Activated CD8-positive, alpha-beta memory T cell treated with anti-CD3 and anti-CD28 coated beads, Interleukin-2, amount 10 ng/mL, durations not matched to agents 7 days and 5 days (primary cell): ENCODE measurements at regions of chr2 and their contacts with region 1.

Region 1: DNA sequence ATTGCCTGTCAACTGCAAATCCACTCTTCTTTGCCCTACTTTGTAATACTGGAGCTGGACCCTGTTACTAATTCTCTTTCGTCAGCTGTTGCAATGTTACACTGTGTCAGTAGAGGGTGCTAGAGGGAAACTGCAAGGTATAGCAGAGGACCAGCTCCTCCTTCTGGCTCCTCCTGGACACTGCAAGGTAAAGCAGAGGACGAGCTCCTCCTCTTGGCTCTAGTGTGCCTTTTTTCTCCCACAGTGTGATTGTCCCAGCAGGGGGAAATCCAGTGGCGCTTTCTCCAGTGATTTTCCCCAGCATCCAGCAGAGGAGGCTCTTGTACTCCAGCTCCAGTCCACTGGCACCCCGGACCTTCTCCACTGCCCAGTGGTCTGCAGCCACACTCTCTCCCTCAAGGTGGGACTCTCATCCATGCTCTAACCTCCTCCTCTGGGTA is 95.6 kb downstream of the CAPN13 start:
- DNase-seq: peak; percentile 94
- ATAC-seq: peak; percentile 79
- H3K4me3 Mint-ChIP-seq: no peak overlapping the region
- H3K27ac Mint-ChIP-seq: no peak overlapping the region
- H3K4me1 Mint-ChIP-seq: peaks cover 14% of the 10 kb centered on the region
- H3K27me3 Mint-ChIP-seq: peaks cover 7% of the 10 kb centered on the region

Region 2: GRCh38 chr2:30089171-30089570 is 622.5 kb before region 1 on chr2:
- CTCF ChIA-PET with region 1: interaction called, 12 read pairs
- DNase-seq: no peak
- ATAC-seq: no peak
- H3K4me3 Mint-ChIP-seq: no peak overlapping the region
- H3K27ac Mint-ChIP-seq: no peak overlapping the region
- H3K4me1 Mint-ChIP-seq: no peaks in the 10 kb centered on the region
- H3K27me3 Mint-ChIP-seq: peaks cover 55% of the 10 kb centered on the region

Region 3: DNA sequence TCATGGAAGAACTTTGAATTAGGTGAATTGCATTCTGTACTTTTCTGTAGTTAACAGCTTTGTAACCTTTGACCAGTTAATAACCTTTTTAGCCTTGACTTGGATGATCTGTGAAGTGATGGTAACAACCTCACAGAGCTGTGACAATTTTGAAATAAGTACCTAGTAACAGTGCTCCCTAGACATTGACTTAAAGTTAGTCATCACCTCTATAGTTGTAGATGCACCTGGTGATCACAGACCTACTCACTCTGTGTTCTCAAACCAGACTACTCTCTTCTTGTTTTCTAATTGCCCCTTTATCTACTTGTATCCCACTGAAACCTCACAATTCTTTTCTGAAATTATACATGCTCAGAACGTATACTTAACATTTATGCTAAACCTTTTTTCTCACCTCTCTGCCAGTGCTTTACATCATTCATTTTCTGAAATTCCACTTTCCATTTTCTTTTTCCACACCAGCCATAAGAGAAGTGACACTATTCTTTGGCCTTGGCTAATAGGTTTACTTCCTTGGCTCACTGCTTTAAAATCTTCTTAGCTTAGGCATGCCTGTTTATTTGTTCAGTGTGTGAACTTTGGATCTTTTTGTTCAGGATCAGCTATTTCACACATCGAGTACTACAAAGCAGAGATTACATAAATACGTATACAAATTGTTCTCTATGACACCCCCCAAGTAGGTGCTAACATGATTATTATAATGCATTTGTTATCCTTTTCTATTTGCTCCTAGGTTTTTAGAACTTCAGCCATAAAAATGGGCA is 555.6 kb before region 1 on chr2:
- CTCF ChIA-PET with region 1: interaction called, 18 read pairs
- DNase-seq: no peak
- ATAC-seq: no peak
- H3K4me3 Mint-ChIP-seq: no peak overlapping the region
- H3K27ac Mint-ChIP-seq: no peak overlapping the region
- H3K4me1 Mint-ChIP-seq: peaks cover 8% of the 10 kb centered on the region
- H3K27me3 Mint-ChIP-seq: no peaks in the 10 kb centered on the region

Region 4: DNA sequence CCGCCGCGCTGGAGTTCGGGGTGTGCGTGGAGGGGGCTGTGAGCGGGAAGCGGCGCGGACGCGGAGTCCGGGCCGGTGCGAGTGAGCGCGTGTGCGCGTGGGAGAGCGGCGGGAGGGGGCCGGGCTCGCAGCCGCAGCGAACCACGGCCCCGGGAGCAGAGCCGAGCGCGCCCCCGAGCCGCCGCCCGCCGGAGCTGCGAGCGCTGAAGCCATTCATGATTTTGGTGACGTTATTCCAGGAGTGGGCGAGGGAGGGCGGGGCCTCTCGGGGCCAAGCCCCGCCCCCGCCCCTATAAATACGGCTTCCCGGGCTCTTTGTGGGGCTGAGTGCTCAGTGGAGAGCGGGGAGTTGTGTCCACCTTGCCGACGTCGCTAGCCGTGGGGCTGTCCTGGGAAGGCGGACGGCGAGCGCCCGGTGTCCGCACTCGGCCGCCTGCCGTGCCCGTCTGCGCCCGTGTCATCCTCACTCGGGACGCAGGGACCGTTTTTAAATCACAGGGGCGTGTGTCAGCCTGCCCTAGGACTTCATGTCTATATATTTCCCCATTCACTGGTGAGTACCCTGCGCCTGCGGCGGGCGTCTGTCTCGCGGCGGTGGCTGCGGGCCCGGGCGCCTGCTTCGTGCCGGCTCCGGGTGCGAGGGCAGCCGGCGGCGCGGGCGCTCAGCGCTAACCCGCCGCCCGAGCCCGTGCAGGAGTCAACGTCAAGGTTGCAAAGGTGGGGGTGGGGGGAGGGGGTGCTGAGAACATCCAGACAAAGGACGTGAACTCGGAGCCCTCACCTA is 480.3 kb before region 1 on chr2 and contains the start of gene LBH:
- CTCF ChIA-PET with region 1: interaction called, 15 read pairs
- DNase-seq: peak; percentile 88
- ATAC-seq: peak; percentile 48
- H3K4me3 Mint-ChIP-seq: peak within 1 kb of the TSS; percentile 73
- H3K27ac Mint-ChIP-seq: peak within 1 kb of the TSS; percentile 78
- H3K4me1 Mint-ChIP-seq: peaks cover 60% of the 10 kb centered on the region
- H3K27me3 Mint-ChIP-seq: peaks cover 12% of the 10 kb centered on the region
- total RNA-seq, gene LBH: 68.5 to 71.5 TPM

Region 5: GRCh38 chr2:30584116-30584515 is 127.5 kb before region 1 on chr2:
- CTCF ChIA-PET with region 1: no interaction called
- DNase-seq: no peak
- ATAC-seq: no peak
- H3K4me3 Mint-ChIP-seq: no peak overlapping the region
- H3K27ac Mint-ChIP-seq: no peak overlapping the region
- H3K4me1 Mint-ChIP-seq: peaks cover 2% of the 10 kb centered on the region
- H3K27me3 Mint-ChIP-seq: no peaks in the 10 kb centered on the region

Region 6: DNA sequence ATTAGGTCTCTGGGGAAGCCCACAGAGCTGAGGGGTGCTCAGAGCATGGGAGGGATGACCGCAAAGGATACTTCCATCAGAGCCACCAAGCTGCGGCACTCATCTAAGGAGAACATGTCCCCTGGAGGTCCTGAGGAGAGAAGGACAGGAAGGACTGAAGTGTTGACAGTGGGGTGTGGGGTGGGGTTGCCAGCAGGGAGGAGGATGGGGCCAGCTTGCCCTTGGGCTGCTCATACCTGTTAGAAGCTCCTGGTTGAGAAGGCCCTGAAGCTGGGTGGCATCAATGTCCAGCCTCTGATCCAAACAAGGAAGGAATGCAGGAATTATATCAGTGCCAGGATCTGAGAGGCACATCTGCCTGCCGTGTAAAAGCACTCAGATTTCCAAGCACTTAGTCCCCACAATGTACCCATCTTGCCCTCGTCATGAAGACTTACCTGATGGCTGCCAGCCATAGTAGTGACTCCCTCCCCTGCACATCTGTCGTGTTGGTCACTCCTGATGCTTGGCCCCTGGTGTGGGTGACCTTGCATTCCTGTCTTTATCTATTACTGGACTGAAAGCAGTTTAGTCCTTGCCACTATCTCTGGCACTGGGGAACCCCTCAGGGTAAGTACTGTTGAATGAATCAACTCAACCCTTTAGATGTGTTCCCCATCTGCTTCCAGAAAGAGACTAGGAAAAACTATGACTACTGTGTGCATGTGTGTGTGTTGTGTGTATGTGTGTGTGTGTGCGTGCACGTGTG is 26.7 kb after region 1 on chr2:
- CTCF ChIA-PET with region 1: no interaction called
- DNase-seq: no peak
- ATAC-seq: no peak
- H3K4me3 Mint-ChIP-seq: no peak overlapping the region
- H3K27ac Mint-ChIP-seq: no peak overlapping the region
- H3K4me1 Mint-ChIP-seq: no peaks in the 10 kb centered on the region
- H3K27me3 Mint-ChIP-seq: peaks cover 6% of the 10 kb centered on the region

Region 7: DNA sequence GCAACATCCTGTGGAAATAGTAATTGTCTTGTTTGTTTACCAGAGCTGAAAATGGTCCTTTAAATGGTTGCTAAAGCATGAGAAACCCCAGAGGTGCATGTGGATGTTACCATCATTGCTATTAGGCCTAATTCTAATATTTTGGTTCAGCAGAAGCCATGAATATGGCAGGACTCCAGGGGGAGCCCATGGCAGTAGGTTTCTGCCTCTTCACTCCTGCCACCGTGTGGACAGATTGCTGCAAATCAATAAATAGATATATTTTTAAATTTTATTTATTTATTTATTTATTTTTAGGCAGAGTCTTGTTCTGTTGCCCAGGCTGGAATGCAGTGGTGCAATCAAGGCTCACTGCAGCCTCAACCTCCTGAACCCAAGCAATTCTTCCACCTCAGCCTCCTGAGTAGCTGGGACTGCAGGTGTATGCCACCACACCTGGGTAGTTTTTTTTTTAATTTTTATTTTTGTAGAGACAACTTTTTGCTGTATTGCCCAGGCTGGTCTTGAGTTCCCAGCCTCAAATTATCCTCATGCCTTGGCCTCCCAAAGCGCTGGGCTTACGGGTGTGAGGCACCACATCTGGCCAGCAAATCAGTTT is 150.5 kb after region 1 on chr2:
- CTCF ChIA-PET with region 1: interaction called, 15 read pairs
- DNase-seq: peak; percentile 65
- ATAC-seq: no peak
- H3K4me3 Mint-ChIP-seq: no peak overlapping the region
- H3K27ac Mint-ChIP-seq: no peak overlapping the region
- H3K4me1 Mint-ChIP-seq: peaks cover 12% of the 10 kb centered on the region
- H3K27me3 Mint-ChIP-seq: peaks cover 6% of the 10 kb centered on the region

Region 8: DNA sequence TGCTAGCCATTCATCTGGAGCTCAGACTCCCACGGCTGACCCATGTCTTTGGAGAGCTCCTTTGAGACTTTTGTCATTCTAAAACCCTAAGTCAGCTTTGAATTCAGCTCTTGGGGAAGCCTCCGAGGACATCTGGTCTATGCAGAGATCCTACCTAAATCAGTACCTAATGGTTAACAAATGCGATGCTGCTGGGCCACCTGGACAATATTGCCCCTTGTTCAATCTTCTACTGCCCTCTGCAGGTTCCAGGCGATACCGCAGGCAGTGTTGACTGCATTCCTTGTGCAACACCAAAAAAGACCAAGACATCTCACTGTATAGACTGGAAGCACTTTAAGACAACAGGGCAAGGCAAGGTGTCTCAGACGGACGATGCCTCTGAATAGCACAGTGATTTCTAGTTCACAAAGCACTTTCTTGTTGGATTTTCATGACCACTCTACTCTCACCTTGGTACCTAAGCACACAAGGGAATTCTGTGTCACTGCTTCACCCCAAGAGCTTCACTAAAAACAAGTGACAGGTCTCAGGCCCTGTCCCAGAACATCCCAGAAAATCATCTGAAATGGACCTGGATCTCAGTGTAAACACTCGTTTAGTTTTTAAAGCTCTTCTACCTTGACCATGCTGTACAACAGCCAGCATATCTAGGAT is 622.0 kb after region 1 on chr2:
- CTCF ChIA-PET with region 1: interaction called, 49 read pairs
- DNase-seq: peak; percentile 87
- ATAC-seq: peak; percentile 94
- H3K4me3 Mint-ChIP-seq: no peak overlapping the region
- H3K27ac Mint-ChIP-seq: no peak overlapping the region
- H3K4me1 Mint-ChIP-seq: no peaks in the 10 kb centered on the region
- H3K27me3 Mint-ChIP-seq: peaks cover 9% of the 10 kb centered on the region